Gastrocnemius medialis (tissue), 4 donors: ENCODE measurements at regions of chrX and their contacts with region 1.

Region 1: GRCh38 chrX:23667239-23668177 is at the start of gene PRDX4:
- DNase-seq: peak; percentile 80 to 88
- ATAC-seq: peak; percentile 93 to 97
- H3K4me3 ChIP-seq: peak within 1 kb of the TSS; percentile 62 to 72 (median 72)
- H3K27ac ChIP-seq: peak within 1 kb of the TSS; percentile 81 to 87 (median 86)
- H3K4me1 ChIP-seq: peaks cover 4 to 9% of the 10 kb centered on the region in 2 donors
- H3K27me3 ChIP-seq: no peaks in the 10 kb centered on the region
- CTCF ChIP-seq: no peak
- POLR2A ChIP-seq: peak; percentile 43 to 49
- total RNA-seq, gene PRDX4: 21.2 to 40.7 (median 37.6) TPM

Region 2: GRCh38 chrX:24464836-24465531 is 797.5 kb after region 1 on chrX and contains the start of gene PDK3:
- in situ Hi-C with region 1: no loop called
- intact Hi-C with region 1: loop called (anchors 5 kb)
- DNase-seq: peak; percentile 59 to 75
- ATAC-seq: peak; percentile 92 to 94
- H3K4me3 ChIP-seq: peak within 1 kb of the TSS; percentile 68 to 79 (median 69)
- H3K27ac ChIP-seq: peak within 1 kb of the TSS; percentile 66 to 77 (median 72)
- H3K4me1 ChIP-seq: no peaks in the 10 kb centered on the region
- H3K27me3 ChIP-seq: no peaks in the 10 kb centered on the region
- CTCF ChIP-seq: no peak
- POLR2A ChIP-seq: peak; percentile 58 to 71
- total RNA-seq, gene PDK3: 1.8 to 4.5 (median 2.7) TPM